Psoas muscle (tissue), 8 donors: ENCODE measurements at regions of chr12 and their contacts with region 1.

Region 1: DNA sequence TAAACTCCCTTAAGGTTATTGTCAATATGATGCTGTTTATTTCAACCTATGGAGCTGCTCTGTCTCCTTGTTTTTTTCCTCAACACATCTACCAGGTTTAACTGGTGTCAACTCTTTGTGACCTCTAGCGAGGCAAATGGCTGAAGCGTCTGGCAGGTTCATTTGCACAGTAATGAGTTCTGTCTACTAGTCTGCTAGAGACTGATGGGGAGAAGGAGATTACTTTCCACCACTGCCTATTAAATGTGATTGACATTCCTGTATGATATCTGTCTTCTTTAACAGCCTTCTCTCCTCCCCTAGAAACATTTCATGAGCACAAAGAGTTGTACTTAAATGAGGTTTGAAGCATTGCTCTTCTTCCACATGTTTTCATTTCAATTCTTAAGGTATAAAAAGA is 253.7 kb downstream of the SLC6A15 start:
- DNase-seq: no peak
- ATAC-seq: no peak
- H3K4me3 ChIP-seq: no peak overlapping the region
- H3K27ac ChIP-seq: no peak overlapping the region
- H3K4me1 ChIP-seq: no peaks in the 10 kb centered on the region
- H3K27me3 ChIP-seq: no peaks in the 10 kb centered on the region
- CTCF ChIP-seq: no peak

Region 2: GRCh38 chr12:84694116-84694515 is 35.2 kb after region 1 on chr12:
- intact Hi-C with region 1: no loop called
- DNase-seq: no peak
- ATAC-seq: no peak
- H3K4me3 ChIP-seq: no peak overlapping the region
- H3K27ac ChIP-seq: no peak overlapping the region
- H3K4me1 ChIP-seq: no peaks in the 10 kb centered on the region
- H3K27me3 ChIP-seq: no peaks in the 10 kb centered on the region
- CTCF ChIP-seq: no peak

Region 3: DNA sequence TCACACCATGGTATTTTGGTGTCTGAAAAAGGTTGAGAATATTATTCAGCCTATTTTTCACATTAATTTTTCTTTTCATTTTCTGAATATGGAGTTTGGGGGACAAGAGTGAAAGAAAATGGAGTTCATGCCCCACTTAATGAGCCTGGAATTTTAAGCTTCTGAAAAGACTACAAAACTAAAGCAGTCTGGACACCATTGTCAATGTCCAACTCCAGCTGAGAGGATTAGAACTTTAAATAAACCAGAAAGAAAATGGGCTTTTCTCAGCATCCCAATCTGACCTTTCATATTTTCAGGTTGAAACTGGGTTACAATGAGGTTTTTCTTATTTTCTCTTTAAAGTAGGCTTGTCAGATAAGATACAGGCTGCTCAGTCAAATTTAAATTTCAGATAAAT is 46.0 kb after region 1 on chr12:
- intact Hi-C with region 1: loop called in 1 of 2 experiments (anchors 1 kb)
- DNase-seq: no peak
- ATAC-seq: no peak
- H3K4me3 ChIP-seq: no peak overlapping the region
- H3K27ac ChIP-seq: no peak overlapping the region
- H3K4me1 ChIP-seq: no peaks in the 10 kb centered on the region
- H3K27me3 ChIP-seq: no peaks in the 10 kb centered on the region
- CTCF ChIP-seq: no peak

Region 4: GRCh38 chr12:84719997-84720396 is 61.1 kb after region 1 on chr12:
- intact Hi-C with region 1: no loop called
- DNase-seq: no peak
- ATAC-seq: no peak
- H3K4me3 ChIP-seq: no peak overlapping the region
- H3K27ac ChIP-seq: no peak overlapping the region
- H3K4me1 ChIP-seq: no peaks in the 10 kb centered on the region
- H3K27me3 ChIP-seq: no peaks in the 10 kb centered on the region
- CTCF ChIP-seq: no peak